Activated T-helper 2 cell treated with anti-CD3 and anti-CD28 coated beads, Interferon-gamma antibody, Interleukin-2, Interleukin-4, amounts not matched to agents 10 μg/mL and 5 μg/mL and 100 μg/mL, durations not matched to agents 14 hours and 24 hours and 36 hours (primary cell): ENCODE measurements at regions of chr12 and their contacts with region 1.

Region 1: DNA sequence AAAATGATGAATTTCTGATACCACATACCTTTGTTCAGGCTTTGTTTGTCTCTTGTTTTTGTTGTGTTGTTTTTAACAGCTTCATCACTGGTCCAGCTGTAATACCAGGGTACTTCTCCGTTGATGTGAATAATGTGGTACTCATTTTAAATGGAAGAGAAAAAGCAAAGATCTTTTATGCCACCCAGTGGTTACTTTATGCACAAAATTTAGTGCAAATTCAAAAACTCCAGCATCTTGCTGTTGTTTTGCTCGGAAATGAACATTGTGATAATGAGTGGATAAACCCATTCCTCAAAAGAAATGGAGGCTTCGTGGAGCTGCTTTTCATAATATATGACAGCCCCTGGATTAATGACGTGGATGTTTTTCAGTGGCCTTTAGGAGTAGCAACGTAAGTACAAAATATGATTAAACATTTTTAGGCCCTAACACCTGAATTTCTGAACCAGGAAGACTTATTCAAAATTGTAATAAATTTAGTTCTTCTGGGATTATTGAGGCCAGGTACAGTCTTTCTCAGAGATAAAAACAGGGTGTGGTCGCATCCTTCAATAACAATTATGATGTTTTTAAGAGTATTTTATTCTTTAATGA is 22.4 kb downstream of the RXYLT1 start:
- DNase-seq: no peak
- H3K4me3 Mint-ChIP-seq: no peak overlapping the region
- H3K27ac Mint-ChIP-seq: no peak overlapping the region
- H3K4me1 Mint-ChIP-seq: no peaks in the 10 kb centered on the region
- H3K27me3 Mint-ChIP-seq: no peaks in the 10 kb centered on the region

Region 2: GRCh38 chr12:63420206-63420644 is 381.9 kb before region 1 on chr12:
- intact Hi-C with region 1: loop called (anchors 5 kb)
- DNase-seq: peak; percentile 13
- H3K4me3 Mint-ChIP-seq: no peak overlapping the region
- H3K27ac Mint-ChIP-seq: no peak overlapping the region
- H3K4me1 Mint-ChIP-seq: no peaks in the 10 kb centered on the region
- H3K27me3 Mint-ChIP-seq: no peaks in the 10 kb centered on the region

Region 3: DNA sequence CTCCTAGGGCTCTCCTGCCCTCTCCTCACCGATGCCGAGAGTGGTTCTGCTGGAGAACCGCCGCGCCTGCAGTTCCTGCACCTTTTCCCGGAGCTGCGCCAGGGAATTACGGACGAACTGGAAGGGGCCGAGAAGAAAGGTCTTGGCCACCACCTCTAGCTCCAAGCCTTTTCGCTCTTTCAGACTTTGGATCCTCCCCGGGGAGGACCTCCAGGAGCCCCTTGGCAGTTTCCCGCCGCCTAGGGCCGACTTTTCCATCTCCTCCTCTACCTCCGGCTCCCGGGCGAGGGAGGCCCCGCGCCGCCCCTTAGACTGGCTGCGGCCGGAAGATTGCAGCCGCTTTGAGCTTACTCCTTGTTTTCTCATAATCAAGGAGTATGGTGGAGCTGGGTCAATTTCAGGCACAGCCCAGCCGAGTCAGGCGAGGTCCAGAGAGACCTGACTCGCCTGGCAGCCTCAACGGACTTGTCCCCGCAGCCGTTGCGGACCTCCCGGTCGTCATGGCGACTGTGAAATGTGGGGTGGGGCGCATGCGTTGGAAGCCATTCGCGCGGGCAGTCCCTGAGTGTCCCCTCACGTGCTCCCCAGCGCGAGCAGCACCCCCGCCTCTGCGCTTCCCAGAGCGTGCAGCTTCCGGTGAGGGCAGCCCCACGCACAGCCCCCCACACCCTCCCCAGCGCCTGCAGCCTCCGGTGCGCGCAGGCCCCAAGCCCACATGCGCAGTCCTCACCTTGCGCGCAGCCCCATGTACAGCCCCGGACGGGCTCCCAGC is 133.9 kb before region 1 on chr12 and contains the start of gene DPY19L2:
- intact Hi-C with region 1: loop called (anchors 5 kb)
- DNase-seq: peak; percentile 14
- H3K4me3 Mint-ChIP-seq: peak within 1 kb of the TSS; percentile 83
- H3K27ac Mint-ChIP-seq: no peak within 1 kb of the TSS
- H3K4me1 Mint-ChIP-seq: peaks cover 10% of the 10 kb centered on the region
- H3K27me3 Mint-ChIP-seq: peaks cover 40% of the 10 kb centered on the region
- total RNA-seq, gene DPY19L2: 0.32 and 0.91 TPM in 2 replicates

Region 4: GRCh38 chr12:63787306-63787705 is 14.8 kb before region 1 on chr12:
- intact Hi-C with region 1: no loop called
- DNase-seq: no peak
- H3K4me3 Mint-ChIP-seq: no peak overlapping the region
- H3K27ac Mint-ChIP-seq: no peak overlapping the region
- H3K4me1 Mint-ChIP-seq: peaks cover 5% of the 10 kb centered on the region
- H3K27me3 Mint-ChIP-seq: no peaks in the 10 kb centered on the region

Region 5: GRCh38 chr12:63905544-63905943 is 103.4 kb after region 1 on chr12:
- intact Hi-C with region 1: no loop called
- DNase-seq: no peak
- H3K4me3 Mint-ChIP-seq: no peak overlapping the region
- H3K27ac Mint-ChIP-seq: no peak overlapping the region
- H3K4me1 Mint-ChIP-seq: no peaks in the 10 kb centered on the region
- H3K27me3 Mint-ChIP-seq: no peaks in the 10 kb centered on the region